Gastrocnemius medialis (tissue), 4 donors: ENCODE measurements at regions of chr17 and their contacts with region 1.

Region 1: DNA sequence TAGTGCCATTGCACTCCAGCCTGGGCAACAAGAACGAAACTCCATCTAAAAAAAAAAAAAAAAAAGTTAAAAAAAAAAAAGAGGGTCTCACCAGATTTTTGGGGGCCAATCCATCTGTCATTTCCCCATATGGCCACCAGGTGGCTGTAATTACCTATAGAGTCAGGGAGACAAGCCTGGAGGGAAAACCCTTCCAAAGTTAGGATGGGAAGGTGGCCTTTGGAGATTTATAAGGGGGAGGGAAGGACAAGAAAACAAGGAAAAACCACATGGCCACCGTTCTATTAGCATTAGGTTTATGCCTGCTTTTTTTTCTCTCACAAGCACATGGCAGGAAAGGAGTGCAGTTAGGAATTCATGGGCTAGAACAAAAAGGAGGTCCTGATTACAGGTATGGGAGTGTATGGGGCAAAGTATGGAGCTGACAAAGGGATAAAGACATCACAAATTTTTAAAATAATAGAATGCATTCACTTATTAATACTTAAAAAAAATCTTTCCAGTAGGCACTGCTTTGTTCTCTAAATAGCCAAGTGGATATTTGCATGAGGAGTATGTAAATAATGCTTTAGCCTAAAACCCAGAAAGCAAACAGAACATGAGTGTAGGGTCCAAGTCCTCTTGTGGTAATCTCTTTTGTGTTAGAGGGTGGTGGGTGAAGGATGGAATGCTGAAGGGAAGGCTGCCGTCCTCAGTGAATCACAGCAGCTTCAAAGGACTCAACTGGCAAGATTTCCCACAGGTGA is 5.1 kb downstream of the CYB5D1 start:
- DNase-seq: no peak
- ATAC-seq: no peak
- H3K4me3 ChIP-seq: no peak overlapping the region
- H3K27ac ChIP-seq: no peak overlapping the region
- H3K4me1 ChIP-seq: peaks cover 9 to 19% of the 10 kb centered on the region in 2 donors
- H3K27me3 ChIP-seq: no peaks in the 10 kb centered on the region
- CTCF ChIP-seq: peak; percentile 76 to 88 (median 84)
- POLR2A ChIP-seq: no peak

Region 2: DNA sequence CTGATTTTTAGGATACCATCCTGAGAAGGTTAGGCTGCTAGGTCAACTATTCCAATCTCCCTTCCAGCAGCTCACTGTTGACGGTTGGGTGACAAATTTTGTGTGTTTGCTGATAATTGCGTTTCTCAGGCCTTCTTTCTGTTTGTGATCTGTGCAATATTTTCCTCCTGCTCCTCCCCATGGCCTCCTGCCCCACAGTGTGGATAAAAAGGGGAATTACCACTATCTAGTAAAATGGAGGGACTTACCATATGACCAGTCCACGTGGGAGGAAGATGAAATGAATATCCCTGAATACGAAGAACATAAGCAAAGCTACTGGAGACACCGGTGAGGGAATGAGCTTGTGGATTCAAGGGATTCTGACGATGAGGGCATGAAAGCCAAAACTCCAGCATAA is 34.9 kb after region 1 on chr17:
- in situ Hi-C with region 1: no loop called
- intact Hi-C with region 1: loop called (anchors 2 kb)
- DNase-seq: no peak
- ATAC-seq: peak; percentile 59 to 68
- H3K4me3 ChIP-seq: no peak overlapping the region
- H3K27ac ChIP-seq: no peak overlapping the region
- H3K4me1 ChIP-seq: peaks cover 0 to 5% of the 10 kb centered on the region in 2 donors
- H3K27me3 ChIP-seq: no peaks in the 10 kb centered on the region
- CTCF ChIP-seq: peak; percentile 28 to 51 (median 43)
- POLR2A ChIP-seq: no peak

Region 3: GRCh38 chr17:7969433-7969832 is 106.6 kb after region 1 on chr17:
- in situ Hi-C with region 1: no loop called
- intact Hi-C with region 1: no loop called
- DNase-seq: no peak
- ATAC-seq: no peak
- H3K4me3 ChIP-seq: no peak overlapping the region
- H3K27ac ChIP-seq: no peak overlapping the region
- H3K4me1 ChIP-seq: peaks cover 7 to 11% of the 10 kb centered on the region in 2 donors
- H3K27me3 ChIP-seq: no peaks in the 10 kb centered on the region
- CTCF ChIP-seq: no peak
- POLR2A ChIP-seq: no peak

Region 4: GRCh38 chr17:8041249-8041928 is 178.5 kb after region 1 on chr17:
- in situ Hi-C with region 1: no loop called
- intact Hi-C with region 1: loop called (anchors 5 kb)
- DNase-seq: peak in 1 of 2 donors; percentile 21
- ATAC-seq: peak; percentile 90 to 92
- H3K4me3 ChIP-seq: peak overlapping the region in 1 of 4 donors; percentile 15
- H3K27ac ChIP-seq: peak overlapping the region; percentile 54 to 61 (median 58)
- H3K4me1 ChIP-seq: peaks cover 3 to 9% of the 10 kb centered on the region in 2 donors
- H3K27me3 ChIP-seq: peaks cover 15 to 26% (median 15%) of the 10 kb centered on the region in 3 donors
- CTCF ChIP-seq: peak; percentile 28 to 54 (median 40)
- POLR2A ChIP-seq: peak in 1 of 2 donors; percentile 10